ENCODE measurements at regions of chr3 and their contacts with region 1.

Region 1: GRCh38 chr3:50347194-50347918 is 1.8 kb upstream of the ZMYND10 start:
- DNase-seq: no peak
- ATAC-seq: no peak
- H3K4me3 ChIP-seq: no peak overlapping the region
- H3K27ac ChIP-seq: no peak overlapping the region
- H3K4me1 ChIP-seq: peaks cover 8% of the 10 kb centered on the region
- H3K27me3 ChIP-seq: no peaks in the 10 kb centered on the region
- CTCF ChIP-seq: peak; percentile 80

Region 2: GRCh38 chr3:50102558-50102957 is 244.8 kb before region 1 on chr3:
- CTCF ChIA-PET with region 1: no interaction called
- POLR2A ChIA-PET with region 1: no interaction called
- in situ Hi-C with region 1: no loop called
- intact Hi-C with region 1: no loop called
- DNase-seq: no peak
- ATAC-seq: no peak
- H3K4me3 ChIP-seq: no peak overlapping the region
- H3K27ac ChIP-seq: no peak overlapping the region
- H3K4me1 ChIP-seq: no peaks in the 10 kb centered on the region
- H3K27me3 ChIP-seq: no peaks in the 10 kb centered on the region
- CTCF ChIP-seq: no peak

Region 3: GRCh38 chr3:50192689-50193141 is 154.6 kb before region 1 on chr3:
- CTCF ChIA-PET with region 1: interaction called, 13 read pairs
- POLR2A ChIA-PET with region 1: no interaction called
- in situ Hi-C with region 1: no loop called
- intact Hi-C with region 1: no loop called
- DNase-seq: peak; percentile 47
- ATAC-seq: peak; percentile 49; the same call in 1 of the 2 replicates
- H3K4me3 ChIP-seq: no peak overlapping the region
- H3K27ac ChIP-seq: no peak overlapping the region
- H3K4me1 ChIP-seq: peaks cover 28% of the 10 kb centered on the region
- H3K27me3 ChIP-seq: no peaks in the 10 kb centered on the region
- CTCF ChIP-seq: peak; percentile 89

Region 4: GRCh38 chr3:50327943-50328691 is 19.2 kb before region 1 on chr3 and contains the start of gene TUSC2:
- CTCF ChIA-PET with region 1: no interaction called
- POLR2A ChIA-PET with region 1: interaction called, 14 read pairs
- in situ Hi-C with region 1: no loop called
- intact Hi-C with region 1: no loop called
- DNase-seq: no peak
- ATAC-seq: peak; percentile 92
- H3K4me3 ChIP-seq: peak within 1 kb of the TSS; percentile 87 to 89
- H3K27ac ChIP-seq: peak within 1 kb of the TSS; percentile 89
- H3K4me1 ChIP-seq: peaks cover 16% of the 10 kb centered on the region
- H3K27me3 ChIP-seq: no peaks in the 10 kb centered on the region
- CTCF ChIP-seq: no peak
- total RNA-seq, gene TUSC2: 35.3 TPM

Region 5: DNA sequence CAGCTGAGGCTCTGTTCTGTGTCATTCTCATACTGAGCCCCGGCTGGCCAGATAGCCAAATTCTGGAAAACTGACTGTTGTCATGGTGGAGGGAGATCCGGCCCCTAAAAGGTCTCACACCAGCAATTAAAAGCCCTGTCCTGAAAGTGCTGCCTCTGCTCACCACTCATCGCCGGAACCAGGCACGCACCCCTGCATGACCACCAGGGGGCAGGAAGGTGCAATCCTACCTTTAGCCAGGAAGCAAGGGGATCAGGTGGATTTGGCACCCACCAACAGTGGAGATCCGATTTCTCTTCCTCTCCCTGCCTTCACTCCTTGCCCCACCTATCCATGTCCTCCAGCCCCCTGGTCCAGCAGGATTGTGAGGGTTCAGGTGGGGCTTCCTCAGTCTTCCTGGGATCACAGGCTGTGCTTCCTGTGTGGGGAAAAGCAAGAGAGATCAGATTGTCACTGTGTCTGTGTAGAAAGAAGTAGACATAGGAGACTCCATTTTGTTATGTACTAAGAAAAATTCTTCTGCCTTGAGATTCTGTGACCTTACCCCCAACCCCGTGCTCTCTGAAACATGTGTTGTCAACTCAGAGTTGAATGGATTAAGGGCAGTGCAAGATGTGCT is 172.2 kb after region 1 on chr3:
- CTCF ChIA-PET with region 1: interaction called, 10 read pairs
- POLR2A ChIA-PET with region 1: no interaction called
- in situ Hi-C with region 1: no loop called
- intact Hi-C with region 1: no loop called
- DNase-seq: peak; percentile 42
- ATAC-seq: peak; percentile 87
- H3K4me3 ChIP-seq: no peak overlapping the region
- H3K27ac ChIP-seq: no peak overlapping the region
- H3K4me1 ChIP-seq: no peaks in the 10 kb centered on the region
- H3K27me3 ChIP-seq: no peaks in the 10 kb centered on the region
- CTCF ChIP-seq: peak; percentile 91

Region 6: DNA sequence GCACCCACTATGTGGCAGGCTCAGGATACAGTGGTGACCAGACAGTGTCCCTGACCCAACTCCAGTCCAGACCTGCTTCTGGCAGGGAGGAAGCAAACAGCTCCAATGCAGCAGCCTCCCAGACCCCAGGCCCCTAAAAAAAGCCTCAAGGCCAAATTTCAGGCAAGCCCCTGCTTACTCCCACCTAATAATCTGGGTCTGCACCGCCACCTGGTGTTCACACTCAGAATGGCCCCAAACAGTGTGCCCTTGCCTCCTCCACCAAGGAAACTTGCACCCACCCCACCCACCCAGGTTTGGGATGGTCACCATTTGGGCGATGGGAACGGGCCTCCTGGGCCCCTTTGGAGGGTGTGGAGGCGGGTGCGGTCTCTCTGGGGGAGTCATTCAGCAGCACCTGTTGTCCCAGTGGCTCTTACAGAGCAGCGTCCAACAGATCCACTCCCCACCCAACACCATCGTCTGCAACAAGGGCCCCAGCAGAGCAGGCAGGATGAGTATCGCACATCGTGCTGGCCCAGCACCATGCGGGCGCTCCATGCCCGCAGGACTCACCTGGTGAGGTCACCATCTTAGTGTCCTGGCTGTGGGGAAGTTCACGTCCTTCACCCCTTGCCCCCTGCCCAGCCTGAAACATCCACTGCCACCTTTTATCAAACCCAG is 202.9 kb after region 1 on chr3:
- CTCF ChIA-PET with region 1: no interaction called
- POLR2A ChIA-PET with region 1: no interaction called
- in situ Hi-C with region 1: no loop called
- intact Hi-C with region 1: loop called (anchors 2 kb)
- DNase-seq: no peak
- ATAC-seq: peak; percentile 70
- H3K4me3 ChIP-seq: no peak overlapping the region
- H3K27ac ChIP-seq: no peak overlapping the region
- H3K4me1 ChIP-seq: no peaks in the 10 kb centered on the region
- H3K27me3 ChIP-seq: no peaks in the 10 kb centered on the region
- CTCF ChIP-seq: peak; percentile 80